PC-3 (cell line): ENCODE measurements at regions of chrX and their contacts with region 1.

Region 1: DNA sequence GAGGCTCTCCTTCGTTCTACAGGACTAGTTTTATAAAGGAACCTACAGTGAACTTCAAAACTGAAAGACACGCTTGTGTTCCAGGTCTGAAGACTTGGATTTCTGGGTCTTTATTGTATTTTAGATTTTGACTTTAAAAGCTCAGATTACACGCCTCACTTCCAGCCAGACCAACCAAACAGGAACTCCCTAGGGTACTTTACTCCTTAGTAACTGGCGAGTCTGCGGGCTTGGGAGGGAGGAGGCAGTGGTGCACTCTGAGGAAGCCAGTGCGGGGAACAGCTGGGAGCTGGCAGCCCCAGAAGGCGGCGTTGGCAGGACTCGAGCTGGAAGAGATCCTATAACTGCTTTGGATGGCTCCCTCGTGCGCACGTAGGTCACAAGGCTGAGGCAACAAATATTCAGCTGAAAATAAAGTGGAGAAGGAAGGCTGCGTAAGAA is 390 bp upstream of the PHKA1 start:
- DNase-seq: peak; percentile 73
- ATAC-seq: peak; percentile 78
- H3K4me3 ChIP-seq: peak overlapping the region; percentile 71
- H3K27ac ChIP-seq: peak overlapping the region; percentile 88
- H3K4me1 ChIP-seq: peaks cover 5% of the 10 kb centered on the region; the same call in 1 of the 2 replicates
- H3K27me3 ChIP-seq: no peaks in the 10 kb centered on the region
- CTCF ChIP-seq: 0 out of 2 replicates have a peak, but pooled peaks have one; percentile 11

Region 2: DNA sequence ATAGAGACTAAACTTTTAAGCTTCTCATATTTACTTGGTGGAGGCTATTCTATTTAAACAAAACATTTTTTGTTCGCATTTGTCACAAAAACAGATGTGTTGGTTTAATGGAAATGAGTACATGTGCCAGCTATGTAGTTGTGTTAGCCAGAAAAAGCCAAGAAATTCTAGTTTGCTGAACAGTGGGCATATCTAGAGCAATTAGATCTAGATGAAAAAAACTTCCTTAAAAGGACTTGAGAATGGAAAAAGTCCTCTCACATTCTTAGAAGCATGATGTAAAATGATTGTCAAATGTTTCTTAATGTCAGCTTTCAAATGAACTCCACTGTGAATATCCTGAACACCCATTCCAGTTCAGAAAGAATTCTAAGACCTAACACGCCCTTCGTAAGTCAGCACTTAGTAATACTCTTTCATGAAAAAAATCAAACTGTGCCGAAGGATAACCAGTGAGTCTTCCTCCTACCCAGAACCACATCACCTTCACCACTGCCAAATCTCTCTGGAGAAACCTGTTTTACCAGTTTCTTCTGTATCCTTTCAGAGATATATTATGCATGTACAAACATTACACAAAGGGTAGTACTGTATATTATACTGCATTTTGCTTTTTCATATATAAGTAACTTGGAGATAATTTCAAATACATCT is 28.6 kb before region 1 on chrX:
- CTCF ChIA-PET with region 1: no interaction called
- POLR2A ChIA-PET with region 1: no interaction called
- intact Hi-C with region 1: loop called (anchors 2 kb)
- DNase-seq: peak; percentile 98
- ATAC-seq: peak; percentile 96
- H3K4me3 ChIP-seq: peak overlapping the region; percentile 44
- H3K27ac ChIP-seq: peak overlapping the region; percentile 95
- H3K4me1 ChIP-seq: peaks cover 33% of the 10 kb centered on the region
- H3K27me3 ChIP-seq: no peaks in the 10 kb centered on the region
- CTCF ChIP-seq: no peak

Region 3: DNA sequence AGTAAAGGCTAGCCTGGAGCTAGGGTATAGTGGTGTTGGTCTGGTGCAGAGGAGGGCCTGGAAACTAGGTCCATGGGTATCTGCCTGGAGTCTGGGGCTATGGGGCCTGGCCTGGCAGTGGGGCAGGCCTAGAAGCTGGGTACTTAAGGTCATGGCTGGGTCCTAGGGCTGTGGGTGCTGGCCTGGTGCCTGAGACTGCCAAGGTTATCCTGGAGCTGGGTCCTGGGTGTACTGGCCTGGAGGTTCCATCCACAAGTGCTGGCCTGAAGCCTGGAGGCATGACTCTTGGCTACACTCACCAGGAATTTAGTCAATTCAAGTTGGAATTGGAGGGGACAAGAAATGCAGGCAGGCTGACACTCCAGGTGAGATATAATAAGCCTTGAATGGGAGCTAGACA is 1481.1 kb after region 1 on chrX:
- CTCF ChIA-PET with region 1: no interaction called
- POLR2A ChIA-PET with region 1: no interaction called
- intact Hi-C with region 1: no loop called
- DNase-seq: no peak
- ATAC-seq: no peak
- H3K4me3 ChIP-seq: no peak overlapping the region
- H3K27ac ChIP-seq: no peak overlapping the region
- H3K4me1 ChIP-seq: no peaks in the 10 kb centered on the region
- H3K27me3 ChIP-seq: no peaks in the 10 kb centered on the region
- CTCF ChIP-seq: no peak